ENCODE measurements at regions of chr3 and their contacts with region 1.

Region 1: DNA sequence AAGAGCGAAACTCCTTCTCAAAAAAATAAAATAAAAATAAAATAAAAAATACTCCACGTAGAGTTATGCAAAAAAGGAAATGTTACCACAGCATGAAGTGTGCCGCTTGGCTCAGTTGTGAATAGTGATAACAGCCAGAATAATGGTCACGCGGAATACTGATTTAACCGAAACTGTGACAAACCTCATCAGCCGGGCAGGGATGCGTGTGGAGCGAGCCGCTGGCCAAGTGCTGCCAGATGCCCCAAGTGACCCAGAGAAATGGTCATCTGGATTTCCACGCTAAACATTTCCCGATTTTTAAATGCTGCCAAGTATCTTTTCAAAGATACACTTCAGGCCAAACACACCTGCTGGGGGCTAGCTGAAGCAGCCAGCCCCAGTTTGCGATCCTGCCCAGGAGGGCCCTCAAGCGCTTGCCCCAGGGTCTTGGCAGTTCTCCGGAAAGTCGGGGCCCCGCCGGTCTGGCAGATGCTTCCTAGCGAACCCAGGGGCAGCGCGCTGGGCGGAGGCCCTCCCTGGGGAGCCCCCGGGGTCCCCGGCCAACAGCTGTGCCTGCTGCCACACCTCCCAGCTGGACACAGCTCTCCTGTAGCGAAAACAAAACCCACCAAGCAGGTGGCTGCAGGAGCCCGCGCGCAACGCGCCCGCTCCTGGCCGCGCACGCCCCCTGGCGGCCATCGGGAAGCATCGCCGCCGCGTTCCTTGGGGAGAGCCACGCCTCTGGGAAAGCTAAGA is 35.1 kb downstream of the CMTM6 start:
- DNase-seq: peak; percentile 63 to 90 (median 90)
- ATAC-seq: peak; percentile 88 to 89
- H3K4me3 ChIP-seq: peak overlapping the region; percentile 44
- H3K27ac ChIP-seq: no peak overlapping the region
- H3K4me1 ChIP-seq: no peaks in the 10 kb centered on the region
- H3K27me3 ChIP-seq: no peaks in the 10 kb centered on the region

Region 2: DNA sequence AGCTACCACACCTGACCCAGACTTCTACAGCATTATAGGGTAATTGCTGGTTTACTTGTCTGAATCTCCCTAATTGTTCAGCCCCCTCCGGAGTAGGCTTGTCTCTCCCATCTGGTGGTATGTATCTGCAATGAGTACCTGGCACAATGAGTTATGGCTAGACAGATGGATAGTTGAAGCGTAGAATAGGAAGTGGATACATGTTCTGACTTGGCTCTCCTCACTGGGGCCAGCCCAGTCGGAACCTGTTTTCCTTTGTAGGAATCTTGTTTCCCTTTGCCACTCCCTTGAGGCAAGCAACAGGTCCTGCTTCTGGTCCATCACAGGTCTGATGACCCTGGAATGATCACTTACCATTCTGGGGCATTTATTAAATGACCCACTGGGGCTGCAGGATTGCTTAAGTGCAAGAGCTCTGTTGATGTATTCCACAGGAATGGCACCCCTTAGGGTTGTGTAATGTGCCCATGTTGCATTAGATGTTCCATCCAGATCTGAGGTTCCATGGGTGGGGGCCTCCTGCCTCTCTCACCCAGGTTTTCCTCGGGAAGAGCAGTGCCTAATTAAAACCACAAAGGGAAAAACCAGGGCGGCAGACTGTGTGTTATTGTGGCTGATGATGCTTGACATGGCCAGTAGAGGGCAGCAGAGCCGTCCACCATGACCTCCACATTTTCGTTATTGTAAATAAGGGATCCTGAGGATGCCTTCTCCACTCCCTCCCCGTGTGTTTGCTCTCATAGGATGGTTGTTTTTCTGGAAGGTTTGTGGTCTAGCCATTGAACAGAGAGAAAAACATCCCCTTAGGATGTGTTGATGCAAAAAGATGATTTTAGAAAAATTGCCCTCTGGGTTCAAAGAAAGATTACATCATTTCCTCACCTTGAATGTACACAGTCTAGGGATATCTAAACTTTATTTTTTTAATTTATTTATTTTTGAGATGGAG is 171.0 kb before region 1 on chr3:
- intact Hi-C with region 1: loop called in 1 of 4 experiments (anchors 2 kb)
- DNase-seq: peak; percentile 43 to 71 (median 64)
- ATAC-seq: peak; percentile 72 to 87
- H3K4me3 ChIP-seq: no peak overlapping the region
- H3K27ac ChIP-seq: no peak overlapping the region
- H3K4me1 ChIP-seq: no peaks in the 10 kb centered on the region
- H3K27me3 ChIP-seq: no peaks in the 10 kb centered on the region

Region 3: DNA sequence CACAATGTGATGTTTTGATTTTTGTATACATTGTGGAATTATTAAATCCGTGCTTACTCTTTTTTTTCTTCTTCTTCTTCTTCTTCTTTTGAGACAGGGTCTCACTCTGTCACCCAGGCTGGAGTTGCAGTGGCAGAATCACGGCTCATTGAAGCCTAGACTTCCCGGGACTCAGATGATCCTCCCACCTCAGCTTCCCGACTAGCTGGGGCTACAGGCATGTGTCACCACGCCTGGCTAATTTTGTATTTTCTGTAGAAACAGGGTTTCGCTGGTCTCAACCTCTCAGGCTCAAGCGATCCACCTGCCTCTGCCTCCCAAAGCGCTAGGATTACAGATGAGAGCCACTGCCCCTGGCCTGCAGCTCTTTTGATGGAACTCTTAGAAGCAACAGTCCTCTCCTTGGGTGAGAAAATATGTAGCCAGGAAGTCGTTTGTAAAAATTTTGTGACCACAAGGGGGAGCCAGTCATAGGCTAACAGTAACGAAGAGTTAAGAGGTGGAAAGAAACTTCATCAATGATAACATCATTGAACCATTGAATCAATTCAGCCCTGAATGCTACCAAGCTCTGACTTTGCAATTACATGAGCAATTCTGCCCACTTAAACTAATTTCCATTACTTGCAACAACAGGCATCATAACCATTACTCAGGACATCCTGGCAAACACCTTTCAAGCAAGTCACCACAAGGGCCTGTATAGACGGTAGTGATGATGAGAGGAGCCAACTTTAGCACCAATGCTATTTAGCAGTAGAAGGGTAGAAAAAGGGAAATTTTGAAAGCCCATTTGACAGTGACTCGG is 92.5 kb before region 1 on chr3:
- intact Hi-C with region 1: loop called (anchors 2 to 5 kb)
- DNase-seq: no peak
- ATAC-seq: peak; percentile 41 to 73
- H3K4me3 ChIP-seq: no peak overlapping the region
- H3K27ac ChIP-seq: no peak overlapping the region
- H3K4me1 ChIP-seq: no peaks in the 10 kb centered on the region
- H3K27me3 ChIP-seq: no peaks in the 10 kb centered on the region

Region 4: GRCh38 chr3:32384938-32385337 is 82.6 kb before region 1 on chr3:
- intact Hi-C with region 1: loop called in 1 of 4 experiments (anchors 5 kb)
- DNase-seq: peak in 1 of 3 donors; percentile 40
- ATAC-seq: peak; percentile 81 to 91
- H3K4me3 ChIP-seq: no peak overlapping the region
- H3K27ac ChIP-seq: no peak overlapping the region
- H3K4me1 ChIP-seq: no peaks in the 10 kb centered on the region
- H3K27me3 ChIP-seq: no peaks in the 10 kb centered on the region

Measured in right cardiac atrium (tissue), 5 donors.